ENCODE measurements at regions of chr9 and their contacts with region 1.

Region 1: DNA sequence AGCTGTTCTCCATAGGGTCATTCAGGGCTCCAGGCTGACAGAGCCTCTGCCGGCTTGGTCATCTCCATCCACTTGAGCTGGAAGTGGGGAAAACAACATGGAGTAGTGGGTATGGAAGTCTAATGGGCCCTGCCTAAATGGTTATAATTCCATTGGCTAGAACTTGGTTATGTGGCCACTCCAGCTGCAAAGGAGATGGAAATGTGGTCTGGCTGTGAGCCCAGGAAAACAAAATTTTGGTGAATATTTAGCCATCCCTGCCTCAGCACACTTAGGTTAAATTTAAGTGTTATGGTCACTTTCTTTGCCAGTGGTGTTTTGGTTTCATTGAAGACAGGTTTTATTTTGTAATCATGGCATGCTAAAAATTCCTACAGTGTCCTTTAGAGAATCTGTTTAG is 112.3 kb downstream of the SMARCA2 start:
- DNase-seq: peak; percentile 18
- H3K4me3 Mint-ChIP-seq: no peak overlapping the region
- H3K27ac Mint-ChIP-seq: no peak overlapping the region
- H3K4me1 Mint-ChIP-seq: peaks cover 15% of the 10 kb centered on the region
- H3K27me3 Mint-ChIP-seq: no peaks in the 10 kb centered on the region
- CTCF ChIP-seq: no peak

Region 2: GRCh38 chr9:1941989-1942388 is 185.5 kb before region 1 on chr9:
- CTCF ChIA-PET with region 1: no interaction called
- POLR2A ChIA-PET with region 1: no interaction called
- intact Hi-C with region 1: no loop called
- DNase-seq: no peak
- H3K4me3 Mint-ChIP-seq: no peak overlapping the region
- H3K27ac Mint-ChIP-seq: no peak overlapping the region
- H3K4me1 Mint-ChIP-seq: no peaks in the 10 kb centered on the region
- H3K27me3 Mint-ChIP-seq: peaks cover 40% of the 10 kb centered on the region
- CTCF ChIP-seq: peak; percentile 31

Region 3: GRCh38 chr9:2043881-2044462 is 83.5 kb before region 1 on chr9:
- CTCF ChIA-PET with region 1: no interaction called
- POLR2A ChIA-PET with region 1: no interaction called
- intact Hi-C with region 1: no loop called
- DNase-seq: no peak
- H3K4me3 Mint-ChIP-seq: no peak overlapping the region
- H3K27ac Mint-ChIP-seq: no peak overlapping the region
- H3K4me1 Mint-ChIP-seq: no peaks in the 10 kb centered on the region
- H3K27me3 Mint-ChIP-seq: no peaks in the 10 kb centered on the region
- CTCF ChIP-seq: no peak

Region 4: GRCh38 chr9:2116073-2116472 is 11.4 kb before region 1 on chr9:
- CTCF ChIA-PET with region 1: interaction called, 12 read pairs
- POLR2A ChIA-PET with region 1: interaction called, 3 read pairs
- intact Hi-C with region 1: no loop called
- DNase-seq: peak; percentile 21
- H3K4me3 Mint-ChIP-seq: no peak overlapping the region
- H3K27ac Mint-ChIP-seq: no peak overlapping the region
- H3K4me1 Mint-ChIP-seq: no peaks in the 10 kb centered on the region
- H3K27me3 Mint-ChIP-seq: no peaks in the 10 kb centered on the region
- CTCF ChIP-seq: peak; percentile 38

Region 5: DNA sequence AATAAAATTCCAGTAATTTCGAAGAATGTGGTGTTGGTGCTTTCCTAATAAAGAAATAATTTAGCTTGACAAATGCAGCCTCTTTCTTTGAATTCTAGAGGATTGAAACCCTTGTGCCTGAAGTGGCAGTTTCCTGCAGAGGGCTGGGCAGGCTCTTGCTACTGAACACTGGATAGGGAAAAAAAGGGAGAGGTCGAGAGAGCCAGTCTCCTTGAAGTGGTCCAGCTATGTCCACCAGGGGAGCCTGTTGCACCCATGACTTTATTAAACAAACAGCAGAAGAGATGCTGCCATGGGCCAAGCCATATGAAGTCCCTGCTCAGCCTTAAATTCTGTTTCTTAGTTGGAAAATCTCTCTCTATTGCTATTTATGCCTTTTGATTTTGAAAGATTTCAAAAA is 66.1 kb after region 1 on chr9:
- CTCF ChIA-PET with region 1: no interaction called
- POLR2A ChIA-PET with region 1: no interaction called
- intact Hi-C with region 1: no loop called
- DNase-seq: no peak
- H3K4me3 Mint-ChIP-seq: no peak overlapping the region
- H3K27ac Mint-ChIP-seq: no peak overlapping the region
- H3K4me1 Mint-ChIP-seq: no peaks in the 10 kb centered on the region
- H3K27me3 Mint-ChIP-seq: no peaks in the 10 kb centered on the region
- CTCF ChIP-seq: no peak

Region 6: DNA sequence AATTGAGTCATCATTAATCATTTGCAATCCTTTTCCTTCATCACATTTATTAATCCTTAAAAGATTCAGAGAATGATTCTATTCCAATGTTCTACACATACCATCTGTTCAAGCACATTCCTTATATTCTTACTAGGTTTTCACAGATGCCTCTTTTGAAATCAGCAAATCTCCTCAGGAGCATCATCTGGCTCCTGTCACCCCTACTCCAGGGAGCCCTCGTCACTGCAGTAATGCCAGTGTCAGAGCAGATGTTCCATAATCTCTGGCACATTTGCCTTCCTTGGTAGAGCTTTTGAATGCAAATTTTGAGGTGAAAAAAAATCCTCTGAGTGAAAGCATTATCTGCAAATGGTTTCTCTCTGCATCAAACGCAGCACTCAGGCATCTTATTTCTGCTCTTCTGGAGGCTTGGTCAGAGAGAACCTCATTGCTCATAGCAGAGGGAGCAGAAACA is 582.2 kb after region 1 on chr9:
- CTCF ChIA-PET with region 1: no interaction called
- POLR2A ChIA-PET with region 1: no interaction called
- intact Hi-C with region 1: no loop called
- DNase-seq: no peak
- H3K4me3 Mint-ChIP-seq: no peak overlapping the region
- H3K27ac Mint-ChIP-seq: no peak overlapping the region
- H3K4me1 Mint-ChIP-seq: no peaks in the 10 kb centered on the region
- H3K27me3 Mint-ChIP-seq: no peaks in the 10 kb centered on the region
- CTCF ChIP-seq: no peak

Measured in MCF 10A (cell line).